Naive thymus-derived CD4-positive, alpha-beta T cell (primary cell): ENCODE measurements at regions of chr3 and their contacts with region 1.

Region 1: DNA sequence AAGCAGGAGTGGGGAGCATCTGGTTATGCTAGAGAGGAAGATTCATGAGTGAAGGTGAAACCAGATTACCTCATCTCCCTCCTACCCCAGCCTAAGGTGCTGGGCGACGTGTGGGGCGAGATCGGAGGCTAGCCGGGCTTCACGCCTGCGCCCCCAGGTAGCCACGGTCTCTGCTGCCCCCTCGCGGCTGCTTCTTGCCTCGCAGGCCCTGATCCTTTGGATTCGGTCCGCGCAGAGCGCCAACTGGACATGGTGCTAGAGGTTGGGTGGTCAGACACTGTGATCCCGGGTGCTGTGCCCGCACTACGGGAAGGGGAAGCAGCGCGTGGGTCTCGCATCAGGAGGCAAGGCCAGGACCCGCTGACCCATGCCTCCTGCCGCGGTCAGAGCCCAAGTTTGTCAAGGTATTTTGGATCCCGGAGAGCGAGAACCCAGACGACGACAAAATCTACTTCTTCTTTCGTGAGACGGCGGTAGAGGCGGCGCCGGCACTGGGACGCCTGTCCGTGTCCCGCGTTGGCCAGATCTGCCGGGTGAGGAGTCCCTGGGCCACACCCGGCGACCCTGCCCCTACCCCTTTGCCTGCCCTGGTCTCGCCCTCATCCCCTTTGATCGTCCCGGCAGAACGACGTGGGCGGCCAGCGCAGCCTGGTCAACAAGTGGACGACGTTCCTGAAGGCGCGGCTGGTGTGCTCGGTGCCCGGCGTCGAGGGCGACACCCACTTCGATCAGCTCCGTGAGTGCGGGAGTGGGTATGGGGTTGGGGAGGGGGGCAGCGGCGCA is 4.2 kb downstream of the SEMA3B start:
- DNase-seq: peak; percentile 65 to 95 (median 80)
- ATAC-seq: peak; percentile 92
- H3K4me3 ChIP-seq: peak overlapping the region; percentile 48
- H3K4me3 Mint-ChIP-seq: peak overlapping the region; percentile 59 to 88 (median 76)
- H3K27ac ChIP-seq: no peak overlapping the region
- H3K27ac Mint-ChIP-seq: peak overlapping the region in 5 of 9 donors; percentile 20 to 82 (median 72)
- H3K4me1 ChIP-seq: peaks cover 10 to 22% of the 10 kb centered on the region in 2 donors
- H3K4me1 Mint-ChIP-seq: peaks cover 21 to 31% (median 26%) of the 10 kb centered on the region in 7 donors
- H3K27me3 ChIP-seq: peaks cover 15 to 23% of the 10 kb centered on the region in 2 donors
- H3K27me3 Mint-ChIP-seq: peaks cover 21 to 50% (median 29%) of the 10 kb centered on the region in 5 donors

Region 2: DNA sequence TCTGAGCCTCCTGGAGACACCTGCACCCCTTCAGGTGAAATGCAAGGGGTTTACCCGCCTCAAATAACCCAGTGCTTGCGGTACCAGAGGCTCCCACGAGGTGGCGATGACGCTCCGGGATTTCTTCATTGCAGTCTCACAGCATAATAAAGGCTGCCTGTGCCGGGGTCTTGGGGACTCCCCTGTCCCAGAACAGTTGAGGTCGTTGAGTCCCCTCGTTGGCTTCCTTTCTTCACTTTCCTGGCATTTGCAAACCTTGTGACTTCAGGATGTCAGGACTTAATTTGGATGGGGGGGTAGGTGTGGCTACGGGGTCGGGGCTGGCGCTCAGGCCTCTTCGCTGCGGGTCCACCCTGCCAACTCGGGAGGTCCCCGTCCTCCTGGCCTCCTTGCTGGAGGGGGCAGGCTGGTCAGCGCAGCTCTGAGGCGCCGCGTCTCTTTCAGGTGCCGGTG is 80.4 kb before region 1 on chr3:
- CTCF ChIA-PET with region 1: interaction called, 47 read pairs
- POLR2A ChIA-PET with region 1: interaction called, 3 read pairs
- intact Hi-C with region 1: loop called (anchors 1 kb)
- DNase-seq: peak; percentile 73 to 90 (median 83)
- ATAC-seq: peak; percentile 53
- H3K4me3 ChIP-seq: no peak overlapping the region
- H3K4me3 Mint-ChIP-seq: peak overlapping the region in 7 of 10 donors; percentile 45 to 67 (median 62)
- H3K27ac ChIP-seq: no peak overlapping the region
- H3K27ac Mint-ChIP-seq: peak overlapping the region in 3 of 9 donors; percentile 51 to 70 (median 65)
- H3K4me1 ChIP-seq: peaks cover 5 to 13% of the 10 kb centered on the region in 2 donors
- H3K4me1 Mint-ChIP-seq: peaks cover 4 to 16% (median 9%) of the 10 kb centered on the region in 7 donors
- H3K27me3 ChIP-seq: no peaks in the 10 kb centered on the region
- H3K27me3 Mint-ChIP-seq: peaks cover 0 to 21% (median 5%) of the 10 kb centered on the region in 5 donors

Region 3: DNA sequence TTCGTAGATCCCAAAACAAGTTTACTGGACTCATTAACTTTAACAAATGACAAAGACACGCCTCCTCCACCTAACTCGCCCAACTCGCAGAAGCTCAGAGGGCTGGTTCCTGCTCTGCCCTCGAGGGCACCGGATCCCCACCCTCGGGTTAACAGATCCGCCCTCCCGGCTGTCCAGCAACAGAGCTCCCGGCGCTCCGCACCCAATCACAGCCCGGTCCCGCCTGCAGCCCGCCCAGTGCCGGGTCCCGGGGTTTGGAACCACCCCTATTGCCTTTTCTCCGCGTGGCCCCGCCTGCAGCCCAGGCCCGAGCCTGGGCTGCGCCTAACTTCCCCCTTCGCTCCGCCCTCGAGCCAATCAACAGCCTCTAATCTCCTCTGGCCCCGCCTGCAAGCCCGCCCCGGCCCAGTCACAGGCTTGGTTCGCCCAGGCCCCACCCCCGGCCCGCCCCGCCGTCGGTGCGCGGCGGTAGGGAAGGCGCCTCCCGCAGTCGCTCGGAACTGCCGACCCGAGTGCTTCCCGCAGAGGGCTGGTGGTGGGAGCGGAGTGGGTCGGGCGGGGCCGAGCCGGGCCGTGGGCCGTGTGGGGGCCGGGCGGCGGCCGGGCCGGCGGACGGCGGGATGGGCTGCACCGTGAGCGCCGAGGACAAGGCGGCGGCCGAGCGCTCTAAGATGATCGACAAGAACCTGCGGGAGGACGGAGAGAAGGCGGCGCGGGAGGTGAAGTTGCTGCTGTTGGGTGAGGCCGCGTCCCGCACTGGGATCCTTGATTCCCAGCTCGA is 37.2 kb before region 1 on chr3 and contains the start of gene GNAI2:
- CTCF ChIA-PET with region 1: no interaction called
- POLR2A ChIA-PET with region 1: no interaction called
- intact Hi-C with region 1: loop called in 1 of 2 experiments (anchors 2 kb)
- DNase-seq: peak; percentile 95 to 99 (median 99)
- ATAC-seq: peak; percentile 93
- H3K4me3 ChIP-seq: peak within 1 kb of the TSS; percentile 90
- H3K4me3 Mint-ChIP-seq: peak within 1 kb of the TSS; percentile 92 to 99 (median 98)
- H3K27ac ChIP-seq: peak within 1 kb of the TSS; percentile 84
- H3K27ac Mint-ChIP-seq: peak within 1 kb of the TSS; percentile 87 to 97 (median 95)
- H3K4me1 ChIP-seq: peaks cover 30 to 35% of the 10 kb centered on the region in 2 donors
- H3K4me1 Mint-ChIP-seq: peaks cover 12 to 41% (median 37%) of the 10 kb centered on the region in 7 donors
- H3K27me3 ChIP-seq: no peaks in the 10 kb centered on the region
- H3K27me3 Mint-ChIP-seq: no peaks in the 10 kb centered on the region
- total RNA-seq, gene GNAI2: 225 to 442 (median 282) TPM

Region 4: DNA sequence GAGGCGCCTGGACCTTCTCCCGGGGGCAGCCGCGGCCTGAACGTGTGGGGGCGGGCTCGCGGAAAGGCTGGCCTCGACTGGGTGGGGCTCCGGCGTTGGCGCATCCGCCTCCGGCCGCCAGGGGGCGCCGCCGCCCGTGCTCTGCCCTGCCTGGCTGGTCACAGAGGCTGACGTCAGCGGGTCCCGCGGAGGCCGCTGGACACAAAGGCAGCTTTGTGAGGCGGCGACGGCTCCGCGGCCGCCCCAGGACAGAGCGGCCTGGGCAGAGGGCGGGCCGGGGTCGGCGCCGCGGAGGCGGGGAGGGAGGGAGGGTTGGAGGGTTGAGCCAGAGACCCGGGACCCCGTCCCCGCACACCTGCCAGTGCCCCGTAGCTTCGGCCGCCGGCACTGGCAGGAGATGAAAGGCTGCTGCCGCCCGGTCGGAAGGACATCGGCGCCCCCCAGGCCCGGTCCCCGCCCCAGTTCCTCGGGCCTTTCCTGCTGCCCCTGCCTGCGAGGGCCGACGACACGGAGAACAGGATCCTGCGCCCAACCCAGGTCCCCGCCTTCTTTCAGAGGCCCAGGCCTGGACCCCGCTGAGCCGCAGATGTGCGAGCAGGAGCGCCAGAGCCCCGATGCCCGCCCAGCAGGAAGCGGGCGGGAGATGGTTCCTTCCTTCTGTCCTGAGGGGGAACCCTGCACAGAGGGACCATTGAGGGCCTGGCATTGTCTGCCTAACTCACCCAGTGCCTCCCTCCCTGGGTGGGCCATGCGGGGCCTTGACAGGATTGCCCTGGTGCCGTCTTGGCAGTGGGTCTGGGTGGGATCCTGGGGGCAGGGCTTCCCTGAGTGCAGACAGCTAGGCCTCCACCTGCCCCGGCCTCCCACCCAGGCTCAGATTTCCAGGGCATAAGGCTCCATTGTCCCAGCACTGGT is 12.8 kb before region 1 on chr3:
- CTCF ChIA-PET with region 1: interaction called, 4 read pairs
- POLR2A ChIA-PET with region 1: no interaction called
- intact Hi-C with region 1: loop called (anchors 1 kb)
- DNase-seq: peak; percentile 58 to 95 (median 78)
- ATAC-seq: peak; percentile 95
- H3K4me3 ChIP-seq: peak overlapping the region; percentile 43
- H3K4me3 Mint-ChIP-seq: peak overlapping the region; percentile 57 to 86 (median 68)
- H3K27ac ChIP-seq: peak overlapping the region; percentile 76
- H3K27ac Mint-ChIP-seq: peak overlapping the region in 8 of 9 donors; percentile 38 to 85 (median 77)
- H3K4me1 ChIP-seq: peaks cover 6% of the 10 kb centered on the region in 2 donors
- H3K4me1 Mint-ChIP-seq: peaks cover 0 to 12% (median 4%) of the 10 kb centered on the region in 7 donors
- H3K27me3 ChIP-seq: no peaks in the 10 kb centered on the region
- H3K27me3 Mint-ChIP-seq: no peaks in the 10 kb centered on the region